Common myeloid progenitor, CD34-positive (primary cell): ENCODE measurements at regions of chr5 and their contacts with region 1.

Region 1: GRCh38 chr5:160081495-160081894 is 37.8 kb downstream of the PWWP2A start:
- DNase-seq: no peak
- H3K4me3 ChIP-seq: no peak overlapping the region
- H3K27ac ChIP-seq: no peak overlapping the region
- H3K4me1 ChIP-seq: no peaks in the 10 kb centered on the region
- H3K27me3 ChIP-seq: no peaks in the 10 kb centered on the region

Region 2: GRCh38 chr5:160021831-160022446 is 59.6 kb before region 1 on chr5:
- CTCF ChIA-PET with region 1: interaction called, 10 read pairs
- POLR2A ChIA-PET with region 1: no interaction called
- DNase-seq: peak; percentile 65 to 81 (median 70)
- H3K4me3 ChIP-seq: no peak overlapping the region
- H3K27ac ChIP-seq: no peak overlapping the region
- H3K4me1 ChIP-seq: no peaks in the 10 kb centered on the region
- H3K27me3 ChIP-seq: no peaks in the 10 kb centered on the region

Region 3: DNA sequence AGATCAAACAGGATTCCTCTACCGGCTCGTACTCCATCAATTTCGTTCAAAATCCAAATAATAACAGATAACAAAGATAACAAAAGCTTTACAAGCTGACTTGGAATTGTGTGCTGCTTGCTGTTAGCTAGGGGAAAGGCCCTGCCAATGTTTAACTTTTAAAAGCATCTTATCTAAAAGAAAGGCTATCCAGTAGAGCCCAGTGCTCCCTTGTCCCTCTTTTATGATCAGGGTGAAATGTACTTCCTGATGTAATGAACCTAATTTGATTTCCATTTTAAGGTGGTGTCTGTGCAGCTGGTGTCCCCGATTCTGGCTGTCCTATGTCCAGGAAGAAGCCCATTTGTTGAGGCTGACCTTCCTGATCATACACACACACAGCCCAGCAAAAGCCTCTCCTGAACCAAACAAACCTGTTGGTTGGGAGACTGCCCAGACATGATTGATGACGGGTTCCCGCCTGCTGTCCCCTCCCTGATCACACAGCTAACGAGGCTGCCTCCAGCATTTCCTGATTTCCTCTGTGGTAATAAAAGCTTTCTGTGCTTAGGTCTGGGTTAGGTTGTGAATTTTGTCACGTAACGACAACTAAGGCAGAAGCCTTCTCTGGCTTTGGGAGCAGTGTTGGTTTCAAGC is 16.4 kb before region 1 on chr5:
- CTCF ChIA-PET with region 1: interaction called, 20 read pairs
- POLR2A ChIA-PET with region 1: interaction called, 3 read pairs
- DNase-seq: peak in 1 of 3 donors; percentile 3
- H3K4me3 ChIP-seq: no peak overlapping the region
- H3K27ac ChIP-seq: no peak overlapping the region
- H3K4me1 ChIP-seq: peaks cover 0 to 6% (median 0%) of the 10 kb centered on the region in 4 experiments
- H3K27me3 ChIP-seq: no peaks in the 10 kb centered on the region

Region 4: GRCh38 chr5:160092960-160093707 is 11.6 kb after region 1 on chr5:
- CTCF ChIA-PET with region 1: interaction called, 12 read pairs
- POLR2A ChIA-PET with region 1: no interaction called
- DNase-seq: no peak
- H3K4me3 ChIP-seq: no peak overlapping the region
- H3K27ac ChIP-seq: no peak overlapping the region
- H3K4me1 ChIP-seq: peaks cover 0 to 3% (median 0%) of the 10 kb centered on the region in 4 experiments
- H3K27me3 ChIP-seq: no peaks in the 10 kb centered on the region

Region 5: GRCh38 chr5:160439205-160439600 is 357.7 kb after region 1 on chr5:
- CTCF ChIA-PET with region 1: no interaction called
- POLR2A ChIA-PET with region 1: no interaction called
- DNase-seq: peak; percentile 86 to 90 (median 87)
- H3K4me3 ChIP-seq: peak overlapping the region; percentile 5 to 94 (median 71)
- H3K27ac ChIP-seq: peak overlapping the region; percentile 18 to 55
- H3K4me1 ChIP-seq: peaks cover 10 to 34% (median 31%) of the 10 kb centered on the region in 4 experiments
- H3K27me3 ChIP-seq: no peaks in the 10 kb centered on the region